AG04449 (cell line): ENCODE measurements at regions of chr5 and their contacts with region 1.

Region 1: GRCh38 chr5:177454397-177455035 is 7.9 kb downstream of the PRR7 start:
- DNase-seq: no peak
- H3K4me3 ChIP-seq: peak overlapping the region; percentile 47
- CTCF ChIP-seq: peak; percentile 79

Region 2: DNA sequence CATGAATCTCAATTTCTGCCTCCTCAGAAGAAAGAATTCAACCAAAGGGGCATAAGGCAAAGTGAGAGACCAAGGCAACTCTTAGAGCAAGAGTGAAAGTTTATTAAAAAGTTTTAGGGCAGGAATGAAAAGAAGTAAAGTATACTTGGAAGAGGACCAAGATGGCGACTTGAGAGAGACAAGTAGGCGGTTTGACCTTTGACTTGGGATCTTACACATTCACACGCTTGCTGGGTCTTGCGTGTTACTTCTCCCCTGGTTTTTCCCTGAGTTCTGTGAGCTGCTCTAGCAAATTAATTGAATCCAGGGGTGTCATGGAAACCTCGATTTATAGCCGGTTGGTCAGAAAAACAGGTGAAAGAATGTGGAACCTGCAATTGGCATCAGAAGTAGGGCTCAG is 425.0 kb before region 1 on chr5:
- CTCF ChIA-PET with region 1: no interaction called
- POLR2A ChIA-PET with region 1: no interaction called
- DNase-seq: no peak
- H3K4me3 ChIP-seq: no peak overlapping the region
- CTCF ChIP-seq: no peak

Region 3: DNA sequence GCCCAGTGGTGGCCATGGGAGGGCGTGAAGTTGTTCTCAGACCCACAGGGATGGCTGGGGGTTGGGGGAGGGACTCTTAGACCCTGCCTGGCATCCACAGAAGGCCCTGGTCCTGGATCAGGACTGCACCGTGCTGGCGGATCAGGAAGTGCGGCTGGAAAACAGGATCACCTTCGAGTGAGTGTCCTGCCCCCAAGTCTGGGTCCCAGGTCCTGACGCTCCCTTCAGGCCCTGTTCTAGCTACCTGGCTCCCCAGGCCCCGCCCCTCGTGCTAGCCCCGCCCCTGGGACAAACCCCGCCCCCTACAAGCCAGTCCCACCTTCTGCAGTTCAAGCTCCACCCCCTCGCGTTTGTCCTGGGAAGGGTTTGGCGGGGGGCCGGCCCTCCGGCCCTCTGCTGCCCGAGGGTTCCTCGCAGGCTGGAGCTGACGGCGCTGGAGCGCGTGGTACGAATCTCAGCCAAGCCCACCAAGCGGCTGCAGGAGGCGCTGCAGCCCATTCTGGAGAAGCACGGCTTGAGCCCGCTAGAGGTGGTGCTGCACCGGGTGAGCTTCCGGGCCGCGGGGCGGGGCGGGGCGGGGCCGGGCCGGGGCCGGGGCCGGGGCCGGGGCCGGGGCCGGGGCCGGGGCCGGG is 83.9 kb before region 1 on chr5:
- CTCF ChIA-PET with region 1: interaction called, 30 read pairs
- POLR2A ChIA-PET with region 1: interaction called, 3 read pairs
- DNase-seq: no peak
- H3K4me3 ChIP-seq: peak overlapping the region; percentile 60
- CTCF ChIP-seq: peak; percentile 76

Region 4: DNA sequence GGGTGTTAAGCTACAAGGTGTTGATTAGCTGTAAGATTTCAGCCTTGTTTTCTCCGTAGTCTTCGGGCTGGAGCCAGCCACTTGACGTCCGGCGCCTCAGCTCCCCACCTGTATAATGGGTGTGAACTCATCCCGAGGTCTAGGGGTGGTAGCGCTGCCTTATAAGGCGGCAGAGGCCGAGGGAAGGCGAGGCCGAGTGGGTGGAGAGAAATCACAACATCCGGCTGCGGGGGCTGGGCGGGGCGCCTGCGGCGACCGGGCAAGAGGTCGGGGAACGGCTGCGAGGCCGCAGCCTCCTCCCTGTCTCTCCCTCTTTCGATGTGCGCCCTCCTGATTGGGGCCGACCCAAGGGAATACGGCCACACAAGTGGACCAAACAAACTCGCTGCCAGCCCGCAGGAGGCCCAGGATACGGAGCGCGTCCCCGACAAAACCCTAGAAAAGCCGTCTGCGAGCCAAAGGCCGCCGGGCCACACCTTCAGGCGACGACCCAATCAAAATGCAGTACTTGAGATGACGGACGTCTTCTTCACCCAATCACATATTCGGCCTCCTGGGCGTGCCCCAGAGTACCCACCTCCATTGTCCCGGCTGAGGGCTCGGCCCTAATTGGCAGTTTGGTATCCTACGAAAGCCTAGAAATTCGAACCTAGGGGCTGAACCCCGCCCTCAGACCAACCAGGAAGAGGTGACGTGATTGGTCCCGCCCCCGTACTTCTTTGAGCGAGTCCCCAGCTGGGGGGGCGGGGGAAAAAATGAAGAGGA is 28.5 kb before region 1 on chr5:
- CTCF ChIA-PET with region 1: interaction called, 12 read pairs
- POLR2A ChIA-PET with region 1: no interaction called
- DNase-seq: peak; percentile 100
- H3K4me3 ChIP-seq: peak overlapping the region; percentile 69
- CTCF ChIP-seq: no peak

Region 5: DNA sequence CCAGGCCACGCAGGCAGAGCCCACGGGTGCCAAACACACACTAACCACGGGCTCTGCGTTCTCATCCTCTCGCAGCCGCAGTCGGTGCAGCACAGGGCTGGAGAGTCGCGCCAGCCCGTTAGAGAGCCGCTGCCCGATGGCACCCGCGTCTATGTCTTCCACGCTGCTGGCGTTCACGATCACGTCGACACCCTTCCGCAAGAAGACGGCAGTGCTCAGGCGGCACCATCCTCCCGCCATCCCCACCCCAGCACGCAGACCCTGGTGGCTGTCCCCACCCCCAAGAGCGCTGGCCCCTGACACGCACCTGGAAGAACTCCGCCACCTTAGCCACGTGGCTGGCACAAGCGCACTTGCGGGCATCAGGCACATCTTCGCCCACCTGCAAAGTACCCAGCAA is 12.9 kb after region 1 on chr5:
- CTCF ChIA-PET with region 1: interaction called, 168 read pairs
- POLR2A ChIA-PET with region 1: interaction called, 37 read pairs
- DNase-seq: no peak
- H3K4me3 ChIP-seq: no peak overlapping the region
- CTCF ChIP-seq: no peak